ENCODE measurements at regions of chr5 and their contacts with region 1.

Region 1: GRCh38 chr5:31531888-31532710 is at the starts of genes C5orf22 and DROSHA:
- DNase-seq: peak; percentile 96
- ATAC-seq: peak; percentile 97
- H3K4me3 Mint-ChIP-seq: peak within 1 kb of the TSS; percentile 82
- H3K27ac Mint-ChIP-seq: peak within 1 kb of the TSS; percentile 80
- H3K4me1 Mint-ChIP-seq: peaks cover 39% of the 10 kb centered on the region
- H3K27me3 Mint-ChIP-seq: no peaks in the 10 kb centered on the region
- total RNA-seq, gene C5orf22: 25.2 to 30.6 TPM
- total RNA-seq, gene DROSHA: 84.3 to 94.4 TPM

Region 2: DNA sequence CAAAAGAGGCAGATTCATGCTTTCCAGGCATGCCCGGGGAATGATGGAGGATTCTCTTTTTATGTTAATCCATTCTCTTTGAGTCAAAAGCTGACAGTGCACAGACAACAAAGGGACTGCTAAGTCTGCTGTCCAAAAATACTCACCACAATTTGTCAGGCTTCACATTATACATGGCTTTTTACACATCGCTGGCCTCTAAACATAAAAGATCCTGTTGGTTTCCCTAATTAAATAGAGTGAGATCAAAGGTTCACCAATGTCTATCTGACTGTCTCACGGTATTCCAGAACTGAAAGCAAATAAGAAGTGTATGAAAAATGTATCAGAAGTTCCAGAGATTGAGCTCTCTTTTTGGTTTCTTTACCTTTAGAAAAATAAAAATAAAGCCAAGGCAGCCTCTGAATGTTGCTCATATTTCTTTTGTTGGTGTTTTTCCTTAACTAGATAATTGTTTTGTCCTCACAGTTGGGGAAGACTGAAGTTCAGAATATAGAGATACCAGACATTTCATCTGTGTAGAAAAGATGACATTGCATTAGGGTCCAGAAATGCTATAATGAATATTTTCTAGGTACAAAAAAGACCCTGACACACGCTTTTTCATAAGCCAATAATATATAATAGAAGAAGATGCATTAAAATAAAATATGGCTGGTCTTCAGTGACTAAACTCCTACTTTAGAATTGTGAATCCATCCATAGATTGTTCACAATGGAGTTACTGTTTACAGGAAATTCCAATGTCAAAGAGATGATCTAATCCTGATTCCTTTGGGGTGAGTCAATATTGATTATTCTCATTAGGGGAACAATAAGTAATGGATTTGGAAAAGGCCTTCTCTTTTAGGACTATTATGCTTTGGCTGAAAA is 1026.8 kb before region 1 on chr5:
- CTCF ChIA-PET with region 1: no interaction called
- POLR2A ChIA-PET with region 1: no interaction called
- intact Hi-C with region 1: no loop called
- DNase-seq: no peak
- ATAC-seq: no peak
- H3K4me3 Mint-ChIP-seq: no peak overlapping the region
- H3K27ac Mint-ChIP-seq: no peak overlapping the region
- H3K4me1 Mint-ChIP-seq: no peaks in the 10 kb centered on the region
- H3K27me3 Mint-ChIP-seq: no peaks in the 10 kb centered on the region

Region 3: GRCh38 chr5:31237174-31237573 is 294.9 kb before region 1 on chr5:
- CTCF ChIA-PET with region 1: no interaction called
- POLR2A ChIA-PET with region 1: no interaction called
- intact Hi-C with region 1: no loop called
- DNase-seq: no peak
- ATAC-seq: no peak
- H3K4me3 Mint-ChIP-seq: no peak overlapping the region
- H3K27ac Mint-ChIP-seq: no peak overlapping the region
- H3K4me1 Mint-ChIP-seq: no peaks in the 10 kb centered on the region
- H3K27me3 Mint-ChIP-seq: peaks cover 15% of the 10 kb centered on the region

Region 4: GRCh38 chr5:31638748-31639418 is 106.8 kb after region 1 on chr5 and contains the start of gene PDZD2:
- CTCF ChIA-PET with region 1: no interaction called
- POLR2A ChIA-PET with region 1: no interaction called
- intact Hi-C with region 1: loop called in 1 of 2 experiments (anchors 1 kb)
- DNase-seq: peak; percentile 82
- ATAC-seq: peak; percentile 82
- H3K4me3 Mint-ChIP-seq: peak within 1 kb of the TSS; percentile 76
- H3K27ac Mint-ChIP-seq: no peak within 1 kb of the TSS
- H3K4me1 Mint-ChIP-seq: peaks cover 16% of the 10 kb centered on the region
- H3K27me3 Mint-ChIP-seq: peaks cover 18% of the 10 kb centered on the region
- total RNA-seq, gene PDZD2: 0.04 to 0.14 TPM

Region 5: GRCh38 chr5:32276173-32276853 is 744.2 kb after region 1 on chr5:
- CTCF ChIA-PET with region 1: no interaction called
- POLR2A ChIA-PET with region 1: no interaction called
- intact Hi-C with region 1: loop called in 1 of 2 experiments (anchors 10 kb)
- DNase-seq: no peak
- ATAC-seq: no peak
- H3K4me3 Mint-ChIP-seq: no peak overlapping the region
- H3K27ac Mint-ChIP-seq: peak overlapping the region; percentile 76
- H3K4me1 Mint-ChIP-seq: peaks cover 53% of the 10 kb centered on the region
- H3K27me3 Mint-ChIP-seq: no peaks in the 10 kb centered on the region